Heart left ventricle (tissue), 16 donors: ENCODE measurements at regions of chr14 and their contacts with region 1.

Region 1: DNA sequence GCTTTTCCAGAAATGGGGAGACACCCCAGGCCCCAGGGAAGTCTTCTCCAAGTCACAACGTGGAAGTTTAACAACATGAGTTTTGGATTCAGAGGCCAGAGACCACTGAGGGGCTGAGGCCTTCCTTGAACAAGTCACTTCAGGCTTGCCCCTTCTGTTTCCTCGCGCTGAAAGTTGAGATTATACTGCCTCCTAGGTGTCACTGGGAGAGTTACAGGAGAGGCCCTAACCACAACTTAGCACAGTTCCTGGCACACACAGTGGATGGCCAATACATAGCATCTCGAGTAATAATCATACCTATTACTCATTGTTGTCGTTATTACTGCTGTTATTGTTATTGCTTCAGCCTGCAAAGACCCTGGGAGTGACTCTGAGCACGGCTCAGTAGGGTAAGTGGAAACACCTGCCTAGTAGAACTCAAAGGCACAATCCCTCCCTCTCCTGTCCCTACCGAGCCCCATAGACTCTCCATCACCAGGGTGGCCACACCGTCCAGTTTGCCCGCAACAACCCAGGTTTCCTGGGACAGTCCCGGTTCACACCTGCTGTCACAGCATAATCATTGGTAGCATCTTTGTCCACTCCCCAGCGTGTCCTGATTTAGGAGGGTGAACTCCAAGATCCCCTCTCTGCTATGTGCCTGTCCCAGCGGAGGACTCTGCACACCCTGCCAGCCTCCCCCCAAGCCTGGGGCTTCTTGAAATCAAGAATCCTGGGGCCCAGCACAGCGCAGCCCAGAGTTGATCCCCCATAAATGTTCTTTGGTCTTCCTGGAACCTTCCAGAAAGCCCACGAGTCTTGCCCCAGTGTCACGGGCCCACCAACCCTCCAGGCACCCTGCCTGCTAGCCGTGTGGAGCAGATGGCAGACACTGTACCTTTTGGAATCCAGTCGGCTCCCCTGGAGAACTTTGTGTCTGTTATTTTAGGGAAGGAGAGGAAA is 85.0 kb downstream of the SYNE3 start:
- DNase-seq: no peak
- ATAC-seq: peak; percentile 8 to 74 (median 58)
- H3K4me3 ChIP-seq: no peak overlapping the region
- H3K27ac ChIP-seq: peak overlapping the region in 6 of 12 donors; percentile 4 to 55 (median 36)
- H3K4me1 ChIP-seq: peaks cover 0 to 16% (median 0%) of the 10 kb centered on the region in 12 donors
- H3K27me3 ChIP-seq: no peaks in the 10 kb centered on the region
- CTCF ChIP-seq: peak; percentile 41 to 71 (median 50)
- POLR2A ChIP-seq: no peak

Region 2: DNA sequence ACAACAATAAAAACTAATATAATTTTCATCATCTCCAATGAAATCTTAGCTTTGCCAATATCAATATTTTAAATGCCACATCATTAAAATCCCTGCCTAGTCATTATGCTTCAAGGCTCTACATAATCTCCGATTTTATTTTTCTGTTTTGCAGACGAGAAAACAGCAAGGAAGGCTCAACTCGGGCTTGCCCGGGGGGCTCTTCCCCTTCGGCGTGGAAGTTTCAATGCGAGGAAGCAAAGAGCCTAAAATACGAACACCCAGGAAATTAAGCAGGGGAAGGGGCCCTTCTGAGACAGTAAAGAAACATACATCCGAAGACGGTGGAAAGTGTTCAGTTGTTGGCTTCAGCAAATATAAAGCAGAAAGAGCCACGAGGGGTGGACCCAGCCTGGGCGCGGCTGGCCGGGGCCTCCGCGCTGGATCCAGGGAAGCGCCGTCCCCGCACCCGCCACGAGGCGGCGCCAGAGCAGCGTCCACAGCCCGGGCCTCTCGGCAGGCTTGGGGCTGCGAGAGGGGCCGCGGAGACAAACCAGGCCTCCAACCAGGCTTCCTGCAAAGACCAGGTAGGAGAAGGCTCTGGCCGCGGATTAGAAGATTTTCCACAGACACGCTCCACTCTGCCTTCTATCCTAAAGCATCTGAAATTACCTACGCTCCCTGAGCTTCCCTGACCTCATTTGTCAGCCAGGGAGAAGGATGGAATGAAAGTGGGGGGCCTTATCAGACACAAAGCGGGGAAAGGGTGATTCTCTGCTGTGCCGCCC is 742.1 kb before region 1 on chr14:
- intact Hi-C with region 1: loop called (anchors 2 to 10 kb)
- DNase-seq: peak; percentile 54 to 80 (median 64)
- ATAC-seq: peak; percentile 81 to 98 (median 88)
- H3K4me3 ChIP-seq: peak overlapping the region in 5 of 12 donors; percentile 0 to 43 (median 7)
- H3K27ac ChIP-seq: no peak overlapping the region
- H3K4me1 ChIP-seq: peaks cover 0 to 8% (median 0%) of the 10 kb centered on the region in 12 donors
- H3K27me3 ChIP-seq: peaks cover 0 to 12% (median 5%) of the 10 kb centered on the region in 9 donors
- CTCF ChIP-seq: peak; percentile 89 to 99 (median 96)
- POLR2A ChIP-seq: no peak

Region 3: DNA sequence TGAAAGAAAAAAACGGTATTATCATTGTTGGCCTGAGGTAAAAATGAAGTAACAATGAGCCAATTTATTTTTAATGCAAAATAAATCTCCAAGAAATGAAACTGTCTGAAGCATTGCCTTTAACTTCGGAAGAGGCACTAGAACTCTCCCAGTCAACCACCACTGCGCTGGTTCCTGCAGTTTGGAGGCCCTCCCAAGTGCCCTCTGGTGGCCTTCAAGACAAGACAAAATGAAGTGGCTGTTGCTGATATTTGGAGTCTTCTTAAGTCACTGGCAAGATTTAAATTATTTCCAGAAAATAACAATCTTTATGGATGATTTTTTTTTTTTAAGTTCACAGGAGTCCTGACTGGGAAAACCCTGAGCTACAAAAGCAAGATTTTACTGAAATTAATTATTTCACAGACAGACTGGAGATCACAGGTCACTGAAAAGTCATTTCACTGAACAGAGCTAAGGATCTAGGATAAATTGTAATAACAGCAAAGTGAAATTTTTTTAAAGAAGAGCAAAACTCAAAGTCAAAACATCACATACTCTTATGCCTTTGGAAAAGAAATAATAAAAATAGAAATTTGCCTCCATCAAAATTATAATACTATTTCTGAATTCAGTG is 332.4 kb before region 1 on chr14:
- intact Hi-C with region 1: loop called in 9 of 10 experiments (anchors 5 to 10 kb)
- DNase-seq: peak in 4 of 5 donors; percentile 53 to 77 (median 61)
- ATAC-seq: peak in 3 of 4 donors; percentile 82 to 85 (median 83)
- H3K4me3 ChIP-seq: no peak overlapping the region
- H3K27ac ChIP-seq: no peak overlapping the region
- H3K4me1 ChIP-seq: peaks cover 0 to 52% (median 12%) of the 10 kb centered on the region in 12 donors
- H3K27me3 ChIP-seq: no peaks in the 10 kb centered on the region
- CTCF ChIP-seq: peak; percentile 54 to 84 (median 70)
- POLR2A ChIP-seq: no peak

Region 4: DNA sequence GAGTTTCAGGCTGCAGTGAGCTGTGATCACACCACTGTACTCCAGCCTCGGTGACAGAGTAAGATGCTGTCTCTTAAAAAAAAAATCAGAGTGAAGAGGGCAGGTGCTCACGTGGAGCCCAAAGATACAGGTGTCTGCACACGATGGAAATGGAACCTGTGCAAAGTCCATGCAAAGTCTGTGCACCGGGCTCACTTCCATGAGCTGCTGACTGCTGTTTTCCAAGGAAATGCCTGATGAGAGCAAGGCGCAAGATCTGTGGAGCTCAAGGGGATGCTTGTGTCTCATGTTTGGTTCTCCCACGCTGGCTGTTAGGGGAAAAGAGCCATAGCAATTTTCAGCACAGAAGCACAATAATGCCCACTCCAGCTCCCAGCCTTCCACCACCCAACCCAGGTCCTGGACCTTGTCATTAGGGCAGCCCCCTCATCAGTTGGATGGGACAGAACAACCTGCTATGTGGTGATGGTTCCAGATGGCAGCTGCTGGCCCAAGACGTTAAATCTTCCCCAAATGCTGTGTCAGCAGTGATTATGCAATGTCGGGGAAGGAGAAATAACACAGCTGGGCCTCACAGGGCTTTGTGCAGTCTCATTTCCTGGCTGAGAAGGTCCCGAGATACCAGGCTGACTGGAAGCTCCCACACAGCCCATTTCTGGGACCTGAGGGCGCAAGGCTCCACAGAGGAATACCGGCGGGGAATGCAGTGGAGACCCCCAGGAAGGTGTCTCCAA is 246.3 kb before region 1 on chr14:
- intact Hi-C with region 1: loop called in 2 of 10 experiments (anchors 5 to 10 kb)
- DNase-seq: peak; percentile 64 to 78 (median 74)
- ATAC-seq: peak; percentile 71 to 91 (median 86)
- H3K4me3 ChIP-seq: peak overlapping the region in 6 of 12 donors; percentile 8 to 51 (median 17)
- H3K27ac ChIP-seq: peak overlapping the region; percentile 69 to 97 (median 84)
- H3K4me1 ChIP-seq: peaks cover 11 to 73% (median 54%) of the 10 kb centered on the region in 12 donors
- H3K27me3 ChIP-seq: peaks cover 0 to 7% (median 0%) of the 10 kb centered on the region in 9 donors
- CTCF ChIP-seq: no peak
- POLR2A ChIP-seq: no peak

Region 5: GRCh38 chr14:95233702-95234241 is 197.7 kb before region 1 on chr14:
- intact Hi-C with region 1: loop called in 1 of 10 experiments (anchors 10 kb)
- DNase-seq: peak; percentile 63 to 88 (median 72)
- ATAC-seq: peak; percentile 76 to 90 (median 86)
- H3K4me3 ChIP-seq: no peak overlapping the region
- H3K27ac ChIP-seq: peak overlapping the region in 7 of 12 donors; percentile 24 to 53 (median 47)
- H3K4me1 ChIP-seq: peaks cover 0 to 52% (median 13%) of the 10 kb centered on the region in 12 donors
- H3K27me3 ChIP-seq: peaks cover 0 to 22% (median 0%) of the 10 kb centered on the region in 9 donors
- CTCF ChIP-seq: no peak
- POLR2A ChIP-seq: no peak

Region 6: GRCh38 chr14:95665156-95665948 is 233.9 kb after region 1 on chr14:
- intact Hi-C with region 1: no loop called
- DNase-seq: no peak
- ATAC-seq: no peak
- H3K4me3 ChIP-seq: no peak overlapping the region
- H3K27ac ChIP-seq: no peak overlapping the region
- H3K4me1 ChIP-seq: peaks cover 0 to 6% (median 0%) of the 10 kb centered on the region in 12 donors
- H3K27me3 ChIP-seq: peaks cover 0 to 38% (median 9%) of the 10 kb centered on the region in 9 donors
- CTCF ChIP-seq: no peak
- POLR2A ChIP-seq: no peak